A673 (cell line): ENCODE measurements at regions of chrX and their contacts with region 1.

Region 1: DNA sequence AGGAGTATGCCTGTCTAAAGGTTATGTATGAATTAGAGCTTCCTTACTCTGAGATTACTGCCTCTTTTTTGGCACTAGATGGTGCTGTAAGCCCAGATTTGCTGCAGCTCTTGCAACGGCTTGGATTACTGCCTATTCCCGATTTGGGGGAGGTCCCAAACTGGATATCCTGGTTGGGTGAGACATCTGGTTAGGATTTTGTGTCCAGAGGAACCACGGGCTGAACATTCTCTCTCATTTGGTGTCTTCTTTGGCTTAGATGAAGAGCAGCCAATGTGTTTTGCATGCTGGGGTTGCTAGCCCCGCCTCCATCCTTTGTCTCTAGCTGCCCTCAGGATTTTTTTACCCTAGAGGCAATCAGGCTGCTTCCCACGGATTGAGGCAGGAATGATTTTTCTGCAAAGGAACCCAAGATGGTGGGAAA is 31.9 kb downstream of the F8A1 start:
- DNase-seq: peak; percentile 87
- H3K4me3 ChIP-seq: no peak overlapping the region
- H3K27ac ChIP-seq: no peak overlapping the region
- H3K4me1 ChIP-seq: no peaks in the 10 kb centered on the region
- H3K27me3 ChIP-seq: no peaks in the 10 kb centered on the region
- CTCF ChIP-seq: peak; percentile 81

Region 2: GRCh38 chrX:154784149-154784995 is 133.7 kb before region 1 on chrX:
- CTCF ChIA-PET with region 1: no interaction called
- POLR2A ChIA-PET with region 1: no interaction called
- intact Hi-C with region 1: no loop called
- DNase-seq: no peak
- H3K4me3 ChIP-seq: no peak overlapping the region
- H3K27ac ChIP-seq: no peak overlapping the region
- H3K4me1 ChIP-seq: no peaks in the 10 kb centered on the region
- H3K27me3 ChIP-seq: no peaks in the 10 kb centered on the region
- CTCF ChIP-seq: no peak

Region 3: GRCh38 chrX:155056877-155057792 is 139.1 kb after region 1 on chrX:
- CTCF ChIA-PET with region 1: interaction called, 6 read pairs
- POLR2A ChIA-PET with region 1: no interaction called
- intact Hi-C with region 1: loop called (anchors 10 kb)
- DNase-seq: peak; percentile 69
- H3K4me3 ChIP-seq: no peak overlapping the region
- H3K27ac ChIP-seq: no peak overlapping the region
- H3K4me1 ChIP-seq: no peaks in the 10 kb centered on the region
- H3K27me3 ChIP-seq: no peaks in the 10 kb centered on the region
- CTCF ChIP-seq: peak; percentile 84

Region 4: GRCh38 chrX:155132110-155132509 is 214.0 kb after region 1 on chrX:
- CTCF ChIA-PET with region 1: interaction called, 3 read pairs
- POLR2A ChIA-PET with region 1: no interaction called
- intact Hi-C with region 1: loop called (anchors 10 kb)
- DNase-seq: no peak
- H3K4me3 ChIP-seq: no peak overlapping the region
- H3K27ac ChIP-seq: no peak overlapping the region
- H3K4me1 ChIP-seq: no peaks in the 10 kb centered on the region
- H3K27me3 ChIP-seq: no peaks in the 10 kb centered on the region
- CTCF ChIP-seq: no peak

Region 5: GRCh38 chrX:155148724-155149537 is 230.9 kb after region 1 on chrX:
- CTCF ChIA-PET with region 1: interaction called, 14 read pairs
- POLR2A ChIA-PET with region 1: no interaction called
- intact Hi-C with region 1: no loop called
- DNase-seq: peak; percentile 31
- H3K4me3 ChIP-seq: no peak overlapping the region
- H3K27ac ChIP-seq: no peak overlapping the region
- H3K4me1 ChIP-seq: no peaks in the 10 kb centered on the region
- H3K27me3 ChIP-seq: no peaks in the 10 kb centered on the region
- CTCF ChIP-seq: peak; percentile 66

Region 6: DNA sequence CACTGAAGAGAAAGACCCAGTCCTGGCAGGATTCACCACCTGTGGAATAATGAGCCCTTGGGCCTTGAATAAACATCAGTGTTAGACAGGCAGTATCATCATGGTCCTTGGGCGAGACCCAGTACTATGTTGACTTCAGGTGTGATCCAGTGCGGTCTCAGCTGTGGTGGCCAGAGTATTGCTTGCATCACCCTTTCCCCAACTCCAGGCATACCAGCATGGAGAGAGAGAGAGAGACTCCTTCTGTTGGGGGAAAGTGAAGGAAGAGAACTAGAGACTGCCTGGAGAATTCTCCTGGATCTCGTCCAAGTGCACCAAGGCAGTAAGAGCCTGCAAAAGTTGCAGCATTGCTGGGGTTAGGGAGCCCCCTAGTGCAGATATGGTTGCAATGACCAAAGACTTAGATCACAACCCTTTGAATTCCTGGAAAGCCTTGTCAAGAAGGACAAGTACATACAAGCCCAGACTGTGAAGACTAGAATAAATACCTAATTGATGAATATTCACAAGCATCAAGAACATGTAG is 902.0 kb after region 1 on chrX:
- CTCF ChIA-PET with region 1: no interaction called
- POLR2A ChIA-PET with region 1: no interaction called
- intact Hi-C with region 1: loop called (anchors 5 kb)
- DNase-seq: peak; percentile 79
- H3K4me3 ChIP-seq: no peak overlapping the region
- H3K27ac ChIP-seq: no peak overlapping the region
- H3K4me1 ChIP-seq: no peaks in the 10 kb centered on the region
- H3K27me3 ChIP-seq: no peaks in the 10 kb centered on the region
- CTCF ChIP-seq: peak; percentile 70